Heart left ventricle (tissue), 16 donors: ENCODE measurements at regions of chr2 and their contacts with region 1.

Region 1: GRCh38 chr2:178271629-178272333 is 77.5 kb downstream of the OSBPL6 start:
- DNase-seq: peak; percentile 79 to 93 (median 85)
- ATAC-seq: peak; percentile 94 to 95 (median 94)
- H3K4me3 ChIP-seq: no peak overlapping the region
- H3K27ac ChIP-seq: peak overlapping the region in 11 of 12 donors; percentile 18 to 79 (median 68)
- H3K4me1 ChIP-seq: peaks cover 0 to 33% (median 8%) of the 10 kb centered on the region in 12 donors
- H3K27me3 ChIP-seq: no peaks in the 10 kb centered on the region
- CTCF ChIP-seq: no peak
- POLR2A ChIP-seq: no peak

Region 2: GRCh38 chr2:178152033-178152432 is 119.7 kb before region 1 on chr2:
- intact Hi-C with region 1: loop called in 1 of 10 experiments (anchors 1 kb)
- DNase-seq: no peak
- ATAC-seq: peak in 2 of 4 donors; percentile 20 to 53
- H3K4me3 ChIP-seq: no peak overlapping the region
- H3K27ac ChIP-seq: no peak overlapping the region
- H3K4me1 ChIP-seq: peaks cover 0 to 7% (median 0%) of the 10 kb centered on the region in 12 donors
- H3K27me3 ChIP-seq: peaks cover 0 to 11% (median 0%) of the 10 kb centered on the region in 9 donors
- CTCF ChIP-seq: no peak
- POLR2A ChIP-seq: no peak